B cell (primary cell): ENCODE measurements at regions of chr19 and their contacts with region 1.

Region 1: DNA sequence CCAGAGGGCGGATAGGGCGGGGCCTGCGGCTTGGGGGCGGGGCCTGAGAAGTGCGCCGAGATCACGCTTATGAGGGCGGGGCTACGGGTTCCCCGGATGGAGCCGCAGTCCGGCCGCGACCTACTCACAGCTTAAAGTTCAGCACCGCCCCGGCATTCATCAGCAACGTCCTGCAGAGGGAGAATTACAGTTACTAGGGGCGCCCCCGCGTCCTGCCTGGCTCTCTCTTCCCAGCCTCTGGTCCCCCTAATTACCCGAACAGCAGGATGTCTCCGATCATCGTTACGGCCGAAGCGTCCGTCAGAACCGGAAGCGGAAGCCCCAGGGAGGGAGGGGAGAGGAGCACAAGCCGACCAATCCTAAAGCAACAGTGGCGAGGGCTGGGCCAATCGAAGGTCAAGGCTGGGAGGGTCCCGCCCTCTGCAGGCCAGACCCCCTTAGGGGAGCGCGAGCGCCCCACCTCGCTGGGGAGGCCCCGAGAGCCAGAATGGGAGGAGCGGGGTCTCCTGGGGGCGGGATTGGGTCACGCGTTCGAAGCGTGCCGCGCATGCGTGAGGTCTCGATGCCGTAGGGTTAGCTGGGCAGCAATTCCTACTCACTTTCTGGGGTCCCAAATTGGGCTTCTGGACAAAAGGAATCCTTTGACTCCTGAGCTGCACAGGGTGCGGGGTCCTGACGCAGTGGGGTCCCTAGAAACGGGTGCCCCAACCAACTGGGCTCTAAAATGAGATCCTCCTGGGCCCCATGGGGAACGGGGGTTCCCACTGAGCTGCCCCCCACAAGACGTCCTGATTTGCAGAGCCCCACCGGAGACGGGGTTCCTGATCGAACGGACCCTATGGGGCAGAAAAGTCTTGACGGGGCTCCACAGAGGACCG is at the start of gene SMIM7:
- DNase-seq: peak; percentile 100
- ATAC-seq: peak; percentile 93
- H3K4me3 ChIP-seq: peak within 1 kb of the TSS; percentile 62 to 89 (median 83)
- H3K4me3 Mint-ChIP-seq: peak within 1 kb of the TSS; percentile 99
- H3K27ac ChIP-seq: peak within 1 kb of the TSS; percentile 70 to 79
- H3K27ac Mint-ChIP-seq: peak within 1 kb of the TSS; percentile 97
- H3K4me1 ChIP-seq: peaks cover 26 to 42% of the 10 kb centered on the region in 2 donors
- H3K4me1 Mint-ChIP-seq: peaks cover 46% of the 10 kb centered on the region
- H3K27me3 ChIP-seq: no peaks in the 10 kb centered on the region
- H3K27me3 Mint-ChIP-seq: no peaks in the 10 kb centered on the region
- CTCF ChIP-seq: no peak
- total RNA-seq, gene SMIM7: 132 and 133 TPM in 2 replicates

Region 2: DNA sequence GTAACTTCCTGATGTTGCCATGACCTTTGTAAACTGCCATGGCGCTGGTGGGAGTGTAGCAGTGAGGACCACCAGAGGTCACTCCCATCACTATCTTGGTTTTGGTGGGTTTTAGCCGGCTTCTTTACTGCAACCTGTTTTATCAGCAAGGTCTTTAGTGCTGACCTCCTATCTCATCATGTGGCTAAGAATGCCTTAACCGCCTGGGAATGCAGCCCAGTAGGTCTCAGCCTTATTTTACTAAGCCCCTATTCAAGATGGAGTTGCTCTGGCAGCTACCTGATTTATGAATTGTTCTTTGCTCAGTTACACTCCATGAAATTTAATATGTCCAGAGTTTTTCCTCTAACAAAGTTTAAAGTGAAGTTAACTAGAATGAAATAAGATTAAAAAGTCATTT is 183.7 kb before region 1 on chr19:
- CTCF ChIA-PET with region 1: no interaction called
- POLR2A ChIA-PET with region 1: no interaction called
- intact Hi-C with region 1: loop called (anchors 1 kb)
- DNase-seq: no peak
- ATAC-seq: no peak
- H3K4me3 ChIP-seq: no peak overlapping the region
- H3K4me3 Mint-ChIP-seq: no peak overlapping the region
- H3K27ac ChIP-seq: no peak overlapping the region
- H3K27ac Mint-ChIP-seq: no peak overlapping the region
- H3K4me1 ChIP-seq: peaks cover 0 to 6% of the 10 kb centered on the region in 2 donors
- H3K4me1 Mint-ChIP-seq: no peaks in the 10 kb centered on the region
- H3K27me3 ChIP-seq: no peaks in the 10 kb centered on the region
- H3K27me3 Mint-ChIP-seq: no peaks in the 10 kb centered on the region
- CTCF ChIP-seq: no peak

Region 3: DNA sequence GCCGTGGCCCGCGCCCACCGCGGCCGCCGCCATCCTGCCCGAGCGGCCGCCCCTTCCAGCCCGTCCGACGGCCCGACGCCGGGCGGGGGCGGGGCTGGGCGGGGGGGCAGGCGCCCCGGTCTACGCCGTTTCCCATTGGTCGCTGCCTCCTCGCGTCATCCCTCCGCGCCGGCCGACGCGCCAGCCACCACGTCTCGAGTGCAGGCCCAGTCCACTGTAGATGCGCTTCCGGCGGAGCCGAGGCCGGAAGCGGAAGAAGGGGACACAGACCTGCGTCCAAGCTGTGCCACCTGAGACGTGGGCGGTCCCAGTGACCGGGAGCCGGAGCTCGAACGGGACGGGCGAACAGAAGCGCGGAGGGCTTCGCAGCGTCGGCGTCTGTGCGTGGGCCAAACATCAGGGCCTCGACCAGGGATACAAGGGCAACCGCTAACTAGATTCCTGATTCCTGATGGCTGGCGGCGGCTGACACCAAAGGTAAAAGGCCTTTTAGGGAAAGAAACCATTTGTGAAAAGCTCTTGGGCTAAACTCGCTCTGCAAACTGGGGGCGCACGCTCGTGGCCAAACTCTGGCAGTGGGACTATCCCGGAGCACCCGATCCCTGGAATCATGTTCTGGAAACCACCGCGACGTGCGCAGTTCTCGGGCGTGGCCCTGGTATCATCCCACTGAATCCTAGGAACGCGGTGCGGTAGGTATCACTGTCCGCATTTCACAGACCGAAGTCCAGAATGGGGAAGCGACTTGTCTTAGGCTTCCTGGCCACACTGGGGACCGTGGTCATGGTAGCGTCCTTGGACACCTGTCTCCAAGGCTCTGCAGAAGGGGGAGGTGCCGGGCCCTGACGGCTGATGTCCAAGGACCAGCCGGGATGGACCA is 87.5 kb before region 1 on chr19 and contains the start of gene SLC35E1:
- CTCF ChIA-PET with region 1: no interaction called
- POLR2A ChIA-PET with region 1: no interaction called
- intact Hi-C with region 1: loop called (anchors 1 kb)
- DNase-seq: peak; percentile 94
- ATAC-seq: peak; percentile 92
- H3K4me3 ChIP-seq: peak within 1 kb of the TSS; percentile 75 to 97 (median 88)
- H3K4me3 Mint-ChIP-seq: peak within 1 kb of the TSS; percentile 98
- H3K27ac ChIP-seq: peak within 1 kb of the TSS; percentile 79 to 96
- H3K27ac Mint-ChIP-seq: peak within 1 kb of the TSS; percentile 98
- H3K4me1 ChIP-seq: peaks cover 27 to 39% of the 10 kb centered on the region in 2 donors
- H3K4me1 Mint-ChIP-seq: peaks cover 46% of the 10 kb centered on the region
- H3K27me3 ChIP-seq: no peaks in the 10 kb centered on the region
- H3K27me3 Mint-ChIP-seq: no peaks in the 10 kb centered on the region
- CTCF ChIP-seq: no peak
- total RNA-seq, gene SLC35E1: 46.8 and 51.6 TPM in 2 replicates

Region 4: GRCh38 chr19:16628183-16628983 is 31.7 kb before region 1 on chr19 and contains the start of gene MED26:
- CTCF ChIA-PET with region 1: interaction called, 7 read pairs
- POLR2A ChIA-PET with region 1: interaction called, 9 read pairs
- intact Hi-C with region 1: loop called (anchors 1 kb)
- DNase-seq: peak; percentile 97
- ATAC-seq: peak; percentile 93
- H3K4me3 ChIP-seq: peak within 1 kb of the TSS; percentile 18 to 93 (median 87)
- H3K4me3 Mint-ChIP-seq: peak within 1 kb of the TSS; percentile 97
- H3K27ac ChIP-seq: peak within 1 kb of the TSS; percentile 87 to 93
- H3K27ac Mint-ChIP-seq: peak within 1 kb of the TSS; percentile 98
- H3K4me1 ChIP-seq: peaks cover 23 to 27% of the 10 kb centered on the region in 2 donors
- H3K4me1 Mint-ChIP-seq: peaks cover 53% of the 10 kb centered on the region
- H3K27me3 ChIP-seq: no peaks in the 10 kb centered on the region
- H3K27me3 Mint-ChIP-seq: no peaks in the 10 kb centered on the region
- CTCF ChIP-seq: no peak
- total RNA-seq, gene MED26: 32.2 and 33.6 TPM in 2 replicates